ENCODE measurements at regions of chr5 and their contacts with region 1.

Region 1: GRCh38 chr5:118894709-118895108 is 93.6 kb downstream of the DTWD2 start:
- DNase-seq: no peak
- ATAC-seq: no peak
- H3K4me3 ChIP-seq: no peak overlapping the region
- H3K27ac ChIP-seq: no peak overlapping the region
- H3K4me1 ChIP-seq: no peaks in the 10 kb centered on the region
- H3K27me3 ChIP-seq: no peaks in the 10 kb centered on the region
- CTCF ChIP-seq: no peak

Region 2: GRCh38 chr5:118791926-118792734 is 102.6 kb before region 1 on chr5:
- intact Hi-C with region 1: no loop called
- DNase-seq: peak in 1 of 2 donors; percentile 41
- ATAC-seq: peak; percentile 72 to 93 (median 84)
- H3K4me3 ChIP-seq: peak overlapping the region in 3 of 10 donors; percentile 3 to 24 (median 11)
- H3K27ac ChIP-seq: peak overlapping the region in 3 of 10 donors; percentile 16 to 48 (median 25)
- H3K4me1 ChIP-seq: peaks cover 0 to 26% (median 9%) of the 10 kb centered on the region in 9 donors
- H3K27me3 ChIP-seq: no peaks in the 10 kb centered on the region
- CTCF ChIP-seq: peak; percentile 64 to 92 (median 80)

Region 3: DNA sequence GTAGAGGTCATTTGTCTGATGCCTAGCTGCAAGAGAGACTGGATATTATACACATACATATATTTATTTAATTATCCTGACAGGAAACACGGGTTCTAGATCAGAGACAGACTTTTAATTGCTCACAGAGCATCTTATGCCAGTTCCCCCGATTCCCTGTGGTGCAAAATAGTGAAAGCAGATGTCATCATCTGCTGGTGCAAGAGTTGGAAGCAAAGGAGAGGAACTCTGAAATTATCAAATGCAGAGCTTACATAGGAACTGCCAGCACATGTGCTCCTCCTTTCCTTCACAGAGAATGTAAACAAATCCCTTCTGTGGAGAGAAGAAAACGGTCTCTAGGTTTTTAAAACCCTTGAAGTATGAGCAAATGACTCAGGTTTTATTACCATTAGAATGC is 24.3 kb after region 1 on chr5:
- intact Hi-C with region 1: no loop called
- DNase-seq: no peak
- ATAC-seq: no peak
- H3K4me3 ChIP-seq: no peak overlapping the region
- H3K27ac ChIP-seq: no peak overlapping the region
- H3K4me1 ChIP-seq: no peaks in the 10 kb centered on the region
- H3K27me3 ChIP-seq: no peaks in the 10 kb centered on the region
- CTCF ChIP-seq: no peak

Region 4: GRCh38 chr5:118933703-118934102 is 39.0 kb after region 1 on chr5:
- intact Hi-C with region 1: loop called in 1 of 10 experiments (anchors 2 kb)
- DNase-seq: no peak
- ATAC-seq: no peak
- H3K4me3 ChIP-seq: no peak overlapping the region
- H3K27ac ChIP-seq: no peak overlapping the region
- H3K4me1 ChIP-seq: peaks cover 0 to 5% (median 0%) of the 10 kb centered on the region in 9 donors
- H3K27me3 ChIP-seq: no peaks in the 10 kb centered on the region
- CTCF ChIP-seq: no peak

Region 5: GRCh38 chr5:118987988-118988865 is 93.5 kb after region 1 on chr5 and contains the start of gene DTWD2:
- intact Hi-C with region 1: no loop called
- DNase-seq: peak; percentile 92 to 94
- ATAC-seq: peak; percentile 96 to 99 (median 98)
- H3K4me3 ChIP-seq: peak within 1 kb of the TSS; percentile 60 to 92 (median 80)
- H3K27ac ChIP-seq: peak within 1 kb of the TSS; percentile 79 to 98 (median 94)
- H3K4me1 ChIP-seq: peaks cover 0 to 29% (median 13%) of the 10 kb centered on the region in 9 donors
- H3K27me3 ChIP-seq: no peaks in the 10 kb centered on the region
- CTCF ChIP-seq: peak; percentile 80 to 95 (median 90)
- total RNA-seq, gene DTWD2: 8.9 to 14.8 (median 12.8) TPM

Region 6: GRCh38 chr5:119229950-119230349 is 335.2 kb after region 1 on chr5:
- intact Hi-C with region 1: no loop called
- DNase-seq: no peak
- ATAC-seq: no peak
- H3K4me3 ChIP-seq: no peak overlapping the region
- H3K27ac ChIP-seq: no peak overlapping the region
- H3K4me1 ChIP-seq: no peaks in the 10 kb centered on the region
- H3K27me3 ChIP-seq: no peaks in the 10 kb centered on the region
- CTCF ChIP-seq: no peak

Measured in heart right ventricle (tissue), 16 donors.